ENCODE measurements at regions of chr15 and their contacts with region 1.

Region 1: GRCh38 chr15:73240866-73241499 is 127.8 kb downstream of the HCN4 start:
- DNase-seq: peak; percentile 28
- ATAC-seq: peak; percentile 83
- H3K4me3 ChIP-seq: no peak overlapping the region
- H3K27ac ChIP-seq: no peak overlapping the region
- H3K4me1 ChIP-seq: no peaks in the 10 kb centered on the region
- H3K27me3 ChIP-seq: no peaks in the 10 kb centered on the region; a peak in 1 of 4 replicates
- CTCF ChIP-seq: peak; percentile 67 to 85 (median 80)
- EP300 ChIP-seq: no peak
- POLR2A ChIP-seq: no peak
- RAD21 ChIP-seq: peak; percentile 89

Region 2: DNA sequence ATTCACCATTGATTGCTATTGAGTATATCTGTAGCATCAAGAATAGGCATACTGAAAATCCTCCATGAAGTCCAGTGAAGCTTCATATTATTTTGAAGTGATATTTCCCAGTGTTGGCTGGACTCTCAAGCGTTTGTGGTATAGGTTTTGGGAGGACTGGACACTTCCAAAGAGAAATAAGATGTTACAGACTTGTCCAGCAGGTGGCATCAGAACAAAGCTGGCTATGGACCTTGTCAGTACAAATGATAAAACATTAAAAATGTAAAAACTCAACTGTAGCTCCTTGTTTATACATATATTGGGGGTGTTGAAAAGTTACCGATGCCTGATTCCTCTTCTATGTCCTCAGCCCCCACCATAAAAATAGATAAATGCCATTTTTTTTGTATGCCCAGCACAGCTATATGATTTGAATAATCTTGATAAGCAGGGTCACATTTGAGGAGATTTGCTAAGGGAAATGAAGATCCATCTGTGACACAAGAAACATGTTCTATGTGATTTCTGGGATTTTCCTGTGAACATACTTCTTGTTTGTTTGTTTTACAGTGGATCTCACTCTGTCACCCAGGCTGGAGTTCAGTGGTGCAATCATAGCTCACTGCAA is 641.0 kb before region 1 on chr15:
- CTCF ChIA-PET with region 1: interaction called, 11 read pairs
- POLR2A ChIA-PET with region 1: interaction called, 5 read pairs
- RAD21 ChIA-PET with region 1: interaction called, 5 read pairs
- SMC1A ChIA-PET with region 1: no interaction called
- in situ Hi-C with region 1: no loop called
- intact Hi-C with region 1: no loop called
- DNase-seq: no peak
- ATAC-seq: peak; percentile 80
- H3K4me3 ChIP-seq: no peak overlapping the region
- H3K27ac ChIP-seq: no peak overlapping the region
- H3K4me1 ChIP-seq: no peaks in the 10 kb centered on the region
- H3K27me3 ChIP-seq: no peaks in the 10 kb centered on the region
- CTCF ChIP-seq: peak; percentile 50 to 62 (median 60)
- EP300 ChIP-seq: no peak
- POLR2A ChIP-seq: no peak
- RAD21 ChIP-seq: peak; percentile 56

Region 3: DNA sequence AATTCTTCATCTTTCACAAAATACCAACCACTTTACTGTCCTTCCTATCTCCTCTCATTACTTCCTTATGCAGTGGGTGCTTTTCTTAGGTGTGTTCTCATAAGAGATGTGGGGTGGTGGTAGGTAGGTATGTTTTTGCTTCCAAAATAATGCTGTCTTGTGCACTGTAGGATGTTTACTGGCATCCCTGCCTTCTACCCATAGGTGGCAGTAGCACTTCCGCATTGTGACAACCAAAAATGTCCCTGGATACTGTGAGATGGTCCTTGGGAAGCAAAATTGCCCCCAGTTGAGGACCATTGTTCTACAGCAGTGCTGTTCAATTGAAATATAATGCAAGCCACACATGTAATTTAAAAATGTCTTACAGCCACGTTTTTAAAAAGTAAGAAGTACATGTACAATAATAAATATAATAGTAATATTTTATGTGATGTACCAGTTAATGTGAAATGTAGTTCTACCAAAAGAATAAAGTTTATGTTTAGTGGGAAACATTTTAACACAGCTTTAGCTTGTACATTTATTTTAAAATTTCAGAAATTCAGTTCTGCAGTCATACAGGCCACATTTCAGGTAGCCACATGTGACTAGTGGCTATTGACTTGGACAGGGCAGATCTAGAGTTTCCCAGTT is 113.6 kb before region 1 on chr15:
- CTCF ChIA-PET with region 1: interaction called, 3 read pairs
- POLR2A ChIA-PET with region 1: no interaction called
- RAD21 ChIA-PET with region 1: no interaction called
- SMC1A ChIA-PET with region 1: no interaction called
- in situ Hi-C with region 1: no loop called
- intact Hi-C with region 1: loop called (anchors 5 kb)
- DNase-seq: peak; percentile 7
- ATAC-seq: peak; percentile 92
- H3K4me3 ChIP-seq: no peak overlapping the region
- H3K27ac ChIP-seq: no peak overlapping the region
- H3K4me1 ChIP-seq: no peaks in the 10 kb centered on the region
- H3K27me3 ChIP-seq: no peaks in the 10 kb centered on the region; a peak in 1 of 4 replicates
- CTCF ChIP-seq: peak; percentile 70 to 92 (median 89)
- EP300 ChIP-seq: no peak
- POLR2A ChIP-seq: no peak
- RAD21 ChIP-seq: 0 out of 2 replicates have a peak, but pooled peaks have one; percentile 8

Region 4: DNA sequence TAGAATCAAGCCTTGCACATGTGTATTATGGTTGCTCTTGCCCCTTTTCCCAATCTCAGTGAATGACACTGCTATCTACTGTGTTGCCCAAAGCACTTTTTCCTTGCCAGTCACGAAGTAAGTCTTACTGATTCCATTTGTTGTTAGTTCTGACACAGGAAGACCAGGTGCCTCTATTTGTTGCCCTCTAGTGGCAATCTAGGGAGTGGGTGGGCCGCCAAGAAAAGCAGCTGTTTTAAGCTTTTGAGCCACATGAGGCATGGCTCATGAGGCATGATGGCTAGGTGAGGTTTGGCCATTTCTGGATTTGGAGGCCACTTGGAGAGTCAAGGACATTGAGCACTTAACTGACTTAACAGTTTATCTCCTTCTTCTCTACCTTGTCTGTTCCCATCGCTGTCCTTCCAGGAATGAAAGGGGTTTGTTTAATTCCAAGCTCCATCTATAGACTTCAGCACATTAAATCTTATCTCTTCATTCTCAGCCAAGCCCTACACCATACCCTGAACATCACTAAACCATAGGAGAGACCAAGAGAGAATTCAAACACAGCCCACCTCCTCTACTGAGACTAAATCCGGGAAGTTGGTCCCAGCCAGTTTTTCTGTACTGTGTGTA is 24.7 kb after region 1 on chr15:
- CTCF ChIA-PET with region 1: interaction called, 78 read pairs
- POLR2A ChIA-PET with region 1: no interaction called
- RAD21 ChIA-PET with region 1: interaction called, 10 read pairs
- SMC1A ChIA-PET with region 1: interaction called, 16 read pairs
- in situ Hi-C with region 1: no loop called
- intact Hi-C with region 1: loop called (anchors 1 kb)
- DNase-seq: no peak
- ATAC-seq: peak; percentile 96
- H3K4me3 ChIP-seq: no peak overlapping the region
- H3K27ac ChIP-seq: no peak overlapping the region
- H3K4me1 ChIP-seq: no peaks in the 10 kb centered on the region
- H3K27me3 ChIP-seq: no peaks in the 10 kb centered on the region
- CTCF ChIP-seq: peak; percentile 82 to 92 (median 82)
- EP300 ChIP-seq: no peak
- POLR2A ChIP-seq: no peak
- RAD21 ChIP-seq: peak; percentile 42

Region 5: DNA sequence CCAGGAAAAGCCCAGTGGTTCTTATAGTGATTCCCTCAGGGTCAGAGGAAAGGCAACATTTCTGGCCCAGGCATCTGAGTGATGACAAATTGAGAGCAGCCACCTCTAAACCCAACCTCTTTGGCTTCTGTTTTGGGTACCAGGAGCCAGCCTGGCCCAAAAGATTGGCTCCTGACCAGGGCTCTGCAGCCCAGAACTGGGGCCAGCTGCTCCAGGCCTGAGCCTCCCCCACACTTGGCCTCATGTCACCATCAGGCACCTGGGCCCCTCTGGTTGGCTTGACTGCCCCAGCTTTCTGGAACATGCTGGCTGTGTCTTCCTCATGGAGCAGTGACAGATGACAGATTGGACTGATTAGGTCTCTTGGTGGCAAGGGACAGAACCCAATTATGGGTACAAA is 153.8 kb after region 1 on chr15:
- CTCF ChIA-PET with region 1: no interaction called
- POLR2A ChIA-PET with region 1: no interaction called
- RAD21 ChIA-PET with region 1: no interaction called
- SMC1A ChIA-PET with region 1: no interaction called
- in situ Hi-C with region 1: no loop called
- intact Hi-C with region 1: no loop called
- DNase-seq: no peak
- ATAC-seq: no peak
- H3K4me3 ChIP-seq: no peak overlapping the region
- H3K27ac ChIP-seq: no peak overlapping the region
- H3K4me1 ChIP-seq: no peaks in the 10 kb centered on the region
- H3K27me3 ChIP-seq: peaks cover 0 to 3% of the 10 kb centered on the region in 2 experiments; a peak in 2 of 4 replicates
- CTCF ChIP-seq: no peak
- EP300 ChIP-seq: no peak
- POLR2A ChIP-seq: no peak
- RAD21 ChIP-seq: no peak

Region 6: DNA sequence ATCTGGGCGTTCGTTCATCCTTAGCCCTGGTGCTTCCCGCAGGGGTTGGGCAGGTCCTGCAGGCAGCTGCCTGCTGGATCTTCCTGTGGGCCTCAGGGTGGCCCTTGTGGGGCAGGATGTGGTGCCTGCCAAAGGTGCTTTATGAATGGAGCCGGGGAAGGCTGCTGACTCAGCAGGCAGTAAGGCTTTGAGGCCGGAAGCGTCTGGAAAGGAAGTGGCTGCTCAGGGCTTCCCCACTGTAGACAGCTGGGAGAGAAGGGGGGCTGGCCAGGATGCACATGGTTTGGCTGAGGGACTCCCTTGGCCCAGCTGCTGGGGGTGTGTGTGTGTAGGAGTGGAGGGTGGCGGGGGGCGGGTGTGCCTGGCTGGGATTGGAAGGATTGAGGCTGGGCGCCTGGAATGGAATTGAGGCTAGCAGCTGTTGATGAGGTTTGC is 456.1 kb after region 1 on chr15:
- CTCF ChIA-PET with region 1: interaction called, 13 read pairs
- POLR2A ChIA-PET with region 1: no interaction called
- RAD21 ChIA-PET with region 1: interaction called, 4 read pairs
- SMC1A ChIA-PET with region 1: interaction called, 8 read pairs
- in situ Hi-C with region 1: no loop called
- intact Hi-C with region 1: loop called (anchors 5 kb)
- DNase-seq: peak; percentile 38
- ATAC-seq: peak; percentile 93
- H3K4me3 ChIP-seq: no peak overlapping the region
- H3K27ac ChIP-seq: peak overlapping the region; percentile 4; the same call in 1 of the 2 replicates
- H3K4me1 ChIP-seq: peaks cover 10% of the 10 kb centered on the region
- H3K27me3 ChIP-seq: no peaks in the 10 kb centered on the region
- CTCF ChIP-seq: no peak
- EP300 ChIP-seq: peak in 1 of 2 experiments; percentile 17; a peak in 1 of 4 replicates
- POLR2A ChIP-seq: no peak
- RAD21 ChIP-seq: no peak